B cell (primary cell): ENCODE measurements at regions of chr1 and their contacts with region 1.

Region 1: GRCh38 chr1:107949467-107950253 is 15.3 kb downstream of the VAV3 start:
- DNase-seq: no peak
- ATAC-seq: no peak
- H3K4me3 ChIP-seq: no peak overlapping the region
- H3K4me3 Mint-ChIP-seq: peak overlapping the region; percentile 2
- H3K27ac ChIP-seq: peak overlapping the region in 1 of 2 donors; percentile 44
- H3K27ac Mint-ChIP-seq: peak overlapping the region; percentile 70
- H3K4me1 ChIP-seq: peaks cover 44 to 75% of the 10 kb centered on the region in 2 donors
- H3K4me1 Mint-ChIP-seq: peaks cover 75% of the 10 kb centered on the region
- H3K27me3 ChIP-seq: no peaks in the 10 kb centered on the region
- H3K27me3 Mint-ChIP-seq: no peaks in the 10 kb centered on the region
- CTCF ChIP-seq: no peak

Region 2: DNA sequence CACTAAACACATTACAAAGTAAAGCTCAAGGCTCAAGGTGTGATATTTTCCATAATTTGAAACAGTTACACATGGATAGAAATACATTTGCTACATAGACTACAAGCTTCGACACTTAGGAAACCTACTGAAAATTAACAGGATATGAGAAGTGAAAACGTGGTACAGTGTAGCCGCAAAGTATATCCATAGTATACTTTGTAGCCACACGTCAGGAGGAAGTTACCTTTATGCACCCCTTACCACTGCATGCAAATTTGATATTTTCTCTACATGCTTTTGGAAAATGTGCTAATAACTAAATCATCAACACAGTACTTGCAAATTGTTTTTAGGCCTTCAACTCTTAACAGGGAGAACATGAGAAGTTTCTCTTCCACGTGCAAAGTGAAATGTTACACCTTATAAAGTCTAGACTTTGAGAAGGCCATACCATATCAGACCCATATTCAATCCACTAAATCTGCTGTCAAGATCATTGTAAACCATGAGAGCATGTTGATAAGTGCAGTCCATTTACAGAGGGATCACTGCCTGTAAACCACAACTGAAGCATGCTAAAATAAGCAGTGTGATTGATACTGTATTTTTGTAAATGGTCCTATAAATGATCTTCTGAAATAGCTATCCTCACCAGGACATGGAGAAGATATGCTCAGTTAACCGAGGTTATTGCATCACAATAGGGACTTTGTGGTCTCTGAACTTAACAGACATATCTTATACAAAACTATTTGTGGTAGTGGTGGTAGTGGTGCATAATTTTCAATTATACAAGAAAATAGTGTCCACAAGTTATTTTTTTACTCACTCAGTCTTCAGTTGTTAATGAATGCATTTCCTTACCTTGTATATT is 49.3 kb before region 1 on chr1:
- CTCF ChIA-PET with region 1: no interaction called
- POLR2A ChIA-PET with region 1: no interaction called
- intact Hi-C with region 1: no loop called
- DNase-seq: peak; percentile 68
- ATAC-seq: peak; percentile 35
- H3K4me3 ChIP-seq: peak overlapping the region in 1 of 5 experiments; percentile 17
- H3K4me3 Mint-ChIP-seq: peak overlapping the region; percentile 74
- H3K27ac ChIP-seq: peak overlapping the region; percentile 52 to 93
- H3K27ac Mint-ChIP-seq: peak overlapping the region; percentile 87
- H3K4me1 ChIP-seq: peaks cover 68 to 72% of the 10 kb centered on the region in 2 donors
- H3K4me1 Mint-ChIP-seq: peaks cover 82% of the 10 kb centered on the region
- H3K27me3 ChIP-seq: no peaks in the 10 kb centered on the region
- H3K27me3 Mint-ChIP-seq: no peaks in the 10 kb centered on the region
- CTCF ChIP-seq: no peak

Region 3: DNA sequence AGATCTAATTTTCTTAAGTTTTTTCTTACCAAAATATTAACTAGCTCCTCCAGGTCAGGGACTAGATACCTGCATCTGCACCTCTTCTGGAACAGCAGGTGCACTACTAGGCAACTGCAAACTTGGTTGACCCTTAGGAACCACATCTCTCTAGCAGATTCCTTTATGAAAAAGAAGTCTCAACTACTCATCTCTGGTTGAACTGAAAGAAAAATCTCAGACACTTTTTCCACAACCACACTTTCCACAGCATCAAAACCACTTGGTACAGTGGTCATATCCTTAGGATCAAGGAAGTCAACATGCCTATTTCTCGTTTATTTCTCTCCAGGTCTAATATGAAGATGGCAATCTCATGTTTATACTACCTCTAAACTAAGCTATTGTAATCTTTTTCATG is 37.0 kb before region 1 on chr1:
- CTCF ChIA-PET with region 1: no interaction called
- POLR2A ChIA-PET with region 1: no interaction called
- intact Hi-C with region 1: no loop called
- DNase-seq: no peak
- ATAC-seq: no peak
- H3K4me3 ChIP-seq: no peak overlapping the region
- H3K4me3 Mint-ChIP-seq: no peak overlapping the region
- H3K27ac ChIP-seq: peak overlapping the region in 1 of 2 donors; percentile 34
- H3K27ac Mint-ChIP-seq: no peak overlapping the region
- H3K4me1 ChIP-seq: peaks cover 8 to 40% of the 10 kb centered on the region in 2 donors
- H3K4me1 Mint-ChIP-seq: peaks cover 67% of the 10 kb centered on the region
- H3K27me3 ChIP-seq: no peaks in the 10 kb centered on the region
- H3K27me3 Mint-ChIP-seq: no peaks in the 10 kb centered on the region
- CTCF ChIP-seq: no peak

Region 4: GRCh38 chr1:107936498-107937481 is 12.9 kb before region 1 on chr1:
- CTCF ChIA-PET with region 1: interaction called, 3 read pairs
- POLR2A ChIA-PET with region 1: no interaction called
- intact Hi-C with region 1: loop called (anchors 2 kb)
- DNase-seq: peak; percentile 42
- ATAC-seq: peak; percentile 54
- H3K4me3 ChIP-seq: no peak overlapping the region
- H3K4me3 Mint-ChIP-seq: peak overlapping the region; percentile 69
- H3K27ac ChIP-seq: peak overlapping the region in 1 of 2 donors; percentile 3
- H3K27ac Mint-ChIP-seq: peak overlapping the region; percentile 78
- H3K4me1 ChIP-seq: peaks cover 50 to 56% of the 10 kb centered on the region in 2 donors
- H3K4me1 Mint-ChIP-seq: peaks cover 81% of the 10 kb centered on the region
- H3K27me3 ChIP-seq: no peaks in the 10 kb centered on the region
- H3K27me3 Mint-ChIP-seq: no peaks in the 10 kb centered on the region
- CTCF ChIP-seq: no peak

Region 5: GRCh38 chr1:107990606-107991005 is 40.9 kb after region 1 on chr1:
- CTCF ChIA-PET with region 1: no interaction called
- POLR2A ChIA-PET with region 1: no interaction called
- intact Hi-C with region 1: loop called (anchors 1 kb)
- DNase-seq: no peak
- ATAC-seq: no peak
- H3K4me3 ChIP-seq: no peak overlapping the region
- H3K4me3 Mint-ChIP-seq: no peak overlapping the region
- H3K27ac ChIP-seq: no peak overlapping the region
- H3K27ac Mint-ChIP-seq: no peak overlapping the region
- H3K4me1 ChIP-seq: no peaks in the 10 kb centered on the region
- H3K4me1 Mint-ChIP-seq: no peaks in the 10 kb centered on the region
- H3K27me3 ChIP-seq: no peaks in the 10 kb centered on the region
- H3K27me3 Mint-ChIP-seq: no peaks in the 10 kb centered on the region
- CTCF ChIP-seq: no peak